Ascending aorta (tissue), 2 donors: ENCODE measurements at regions of chr18 and their contacts with region 1.

Region 1: DNA sequence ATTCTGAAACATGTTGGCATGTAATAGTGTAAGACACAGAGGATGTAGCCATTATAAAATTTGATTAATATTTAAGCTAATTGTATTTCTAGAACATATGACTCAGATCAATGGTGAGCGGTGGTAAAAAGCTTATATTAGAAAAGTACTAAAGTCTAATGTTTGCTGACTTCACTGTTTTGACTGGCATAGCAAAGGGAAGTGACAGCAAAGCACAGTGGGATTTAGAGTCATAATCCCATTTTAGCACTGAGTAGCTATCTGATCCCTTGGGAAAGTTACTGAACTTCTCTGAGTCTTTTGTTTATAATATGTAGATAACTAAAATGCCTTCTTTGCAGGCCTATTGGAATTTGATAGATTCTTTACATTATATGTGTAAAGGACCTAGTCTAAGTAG is 60.4 kb downstream of the KIAA1328 start:
- DNase-seq: no peak
- H3K4me3 ChIP-seq: no peak overlapping the region
- H3K27ac ChIP-seq: peak overlapping the region; percentile 37 to 76
- H3K4me1 ChIP-seq: peaks cover 0 to 24% of the 10 kb centered on the region in 2 donors
- H3K27me3 ChIP-seq: no peaks in the 10 kb centered on the region
- CTCF ChIP-seq: no peak

Region 2: DNA sequence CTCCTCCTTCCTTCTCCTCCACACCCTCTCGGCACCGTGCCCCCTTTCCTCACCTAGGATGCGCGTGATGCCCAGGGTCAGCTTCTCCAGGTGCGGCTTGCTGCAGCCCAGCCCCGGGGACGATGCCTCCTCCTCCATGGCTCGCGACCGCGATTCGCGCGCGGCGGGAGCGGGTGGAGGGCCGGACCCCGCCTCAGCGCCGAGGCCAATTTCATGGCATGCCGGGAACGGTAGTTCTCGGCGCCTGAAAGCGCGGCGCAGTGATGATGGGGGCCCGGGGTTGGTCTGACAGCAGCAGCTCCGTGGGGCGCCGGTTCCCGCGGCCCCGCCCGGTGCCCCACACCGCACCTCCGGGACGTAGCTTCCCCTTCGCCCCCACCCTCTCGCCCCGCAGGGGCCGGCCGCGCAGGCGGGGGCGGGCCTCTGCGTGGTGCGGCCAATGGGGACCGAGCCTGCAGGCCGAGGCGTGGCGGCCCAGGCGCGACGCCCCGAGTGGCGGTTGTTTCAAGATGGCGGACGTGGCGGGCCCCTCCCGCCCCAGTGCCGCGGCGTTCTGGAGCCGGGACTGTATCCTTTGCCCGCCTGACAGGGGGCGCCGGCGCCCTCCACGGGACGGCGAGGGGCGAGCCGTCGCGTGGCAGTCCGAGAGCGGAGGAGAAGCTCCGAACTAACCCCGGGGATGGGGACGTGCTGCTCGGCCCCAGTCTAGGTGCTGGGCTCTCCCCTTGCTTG is 60.5 kb before region 1 on chr18 and contains the starts of genes KIAA1328 and TPGS2:
- intact Hi-C with region 1: loop called (anchors 5 kb)
- DNase-seq: peak; percentile 51 to 92
- H3K4me3 ChIP-seq: peak within 1 kb of the TSS; percentile 69 to 74
- H3K27ac ChIP-seq: peak within 1 kb of the TSS; percentile 78 to 82
- H3K4me1 ChIP-seq: peaks cover 0 to 15% of the 10 kb centered on the region in 2 donors
- H3K27me3 ChIP-seq: no peaks in the 10 kb centered on the region
- CTCF ChIP-seq: peak; percentile 20 to 58 (median 57)
- total RNA-seq, gene KIAA1328: 8.4 TPM
- total RNA-seq, gene TPGS2: 165 TPM

Region 3: GRCh38 chr18:36942264-36942663 is 52.9 kb after region 1 on chr18:
- intact Hi-C with region 1: no loop called
- DNase-seq: no peak
- H3K4me3 ChIP-seq: no peak overlapping the region
- H3K27ac ChIP-seq: no peak overlapping the region
- H3K4me1 ChIP-seq: no peaks in the 10 kb centered on the region
- H3K27me3 ChIP-seq: no peaks in the 10 kb centered on the region
- CTCF ChIP-seq: peak in 1 of 3 experiments; percentile 19